ENCODE measurements at regions of chr7 and their contacts with region 1.

Region 1: DNA sequence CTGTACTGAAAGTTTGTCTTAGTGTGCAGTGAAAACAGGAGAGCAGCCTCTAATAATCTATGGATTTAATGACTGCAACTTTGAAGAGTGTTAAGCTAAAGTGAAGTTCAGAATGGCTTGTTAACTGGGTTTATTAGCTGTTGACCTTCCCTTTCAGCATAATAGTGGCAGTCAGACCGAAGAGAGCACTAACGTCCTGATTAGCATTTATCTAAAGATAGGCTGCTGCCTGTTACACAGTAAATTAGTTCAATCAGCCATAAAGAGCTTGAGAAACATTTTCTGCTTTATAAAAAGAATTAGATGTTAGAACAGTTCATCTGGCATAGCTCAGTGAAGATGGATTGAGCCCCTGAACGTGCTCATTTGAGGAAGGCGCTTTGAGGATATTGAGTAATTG is 433.0 kb downstream of the AUTS2 start:
- DNase-seq: no peak
- H3K4me3 ChIP-seq: no peak overlapping the region
- H3K27ac ChIP-seq: no peak overlapping the region
- H3K4me1 ChIP-seq: peaks cover 23% of the 10 kb centered on the region
- H3K27me3 ChIP-seq: no peaks in the 10 kb centered on the region
- CTCF ChIP-seq: no peak

Region 2: GRCh38 chr7:71484380-71484779 is 1453.1 kb after region 1 on chr7:
- CTCF ChIA-PET with region 1: interaction called, 13 read pairs
- POLR2A ChIA-PET with region 1: no interaction called
- intact Hi-C with region 1: no loop called
- DNase-seq: no peak
- H3K4me3 ChIP-seq: no peak overlapping the region
- H3K27ac ChIP-seq: no peak overlapping the region
- H3K4me1 ChIP-seq: no peaks in the 10 kb centered on the region
- H3K27me3 ChIP-seq: no peaks in the 10 kb centered on the region
- CTCF ChIP-seq: no peak

Measured in A673 (cell line).